ENCODE measurements at regions of chr2 and their contacts with region 1.

Region 1: GRCh38 chr2:217434181-217434975 is 568.4 kb downstream of the TNS1 start:
- DNase-seq: peak; percentile 95
- H3K4me3 ChIP-seq: peak overlapping the region; percentile 6 to 18 (median 12)
- H3K27ac ChIP-seq: peak overlapping the region; percentile 67 to 75 (median 75)
- H3K4me1 ChIP-seq: peaks cover 48 to 94% (median 90%) of the 10 kb centered on the region in 4 donors
- H3K27me3 ChIP-seq: no peaks in the 10 kb centered on the region
- CTCF ChIP-seq: no peak
- EP300 ChIP-seq: no peak
- POLR2A ChIP-seq: no peak

Region 2: DNA sequence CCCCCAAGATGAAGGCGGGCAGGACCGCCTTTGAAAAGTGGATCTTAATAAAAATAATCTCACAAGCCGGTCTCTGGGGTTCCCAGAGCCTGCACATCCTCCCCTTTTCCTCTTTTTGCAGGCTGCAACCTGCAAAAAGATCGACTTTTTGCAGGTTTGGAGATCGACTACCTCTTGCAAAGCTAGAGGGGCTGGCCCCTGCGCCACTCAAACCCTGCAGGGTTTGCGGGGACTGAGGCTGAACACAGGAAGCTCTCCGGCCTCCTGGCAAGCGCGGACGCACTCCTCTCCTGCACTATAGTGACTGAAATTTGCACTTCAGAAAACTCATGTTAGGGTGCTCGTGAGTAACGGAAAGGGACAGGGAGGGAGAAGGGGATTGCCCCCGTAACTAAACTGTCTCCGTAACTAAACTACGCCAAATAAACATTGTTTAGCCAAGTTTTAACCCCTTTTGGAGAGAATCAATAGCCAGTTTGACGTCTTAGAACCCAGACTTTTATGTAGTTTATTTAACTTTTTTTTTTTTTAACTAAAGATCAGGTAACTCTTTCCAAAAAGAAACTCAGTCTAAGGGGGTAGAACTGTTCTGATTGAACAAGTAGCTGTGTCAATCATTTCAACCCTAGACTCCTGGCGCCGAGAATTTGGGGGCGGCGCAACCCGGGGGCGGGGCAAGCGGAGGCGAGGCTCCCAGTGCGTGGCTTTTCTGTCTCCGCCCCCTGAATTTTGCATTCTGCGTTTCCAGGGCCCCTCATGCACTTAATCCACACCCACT is 741.6 kb before region 1 on chr2:
- intact Hi-C with region 1: loop called (anchors 5 kb)
- DNase-seq: peak; percentile 97
- H3K4me3 ChIP-seq: peak overlapping the region; percentile 70 to 77 (median 74)
- H3K27ac ChIP-seq: peak overlapping the region; percentile 84 to 94 (median 88)
- H3K4me1 ChIP-seq: peaks cover 54 to 98% (median 92%) of the 10 kb centered on the region in 4 donors
- H3K27me3 ChIP-seq: peaks cover 0 to 12% (median 0%) of the 10 kb centered on the region in 4 donors
- CTCF ChIP-seq: no peak
- EP300 ChIP-seq: no peak
- POLR2A ChIP-seq: no peak

Region 3: DNA sequence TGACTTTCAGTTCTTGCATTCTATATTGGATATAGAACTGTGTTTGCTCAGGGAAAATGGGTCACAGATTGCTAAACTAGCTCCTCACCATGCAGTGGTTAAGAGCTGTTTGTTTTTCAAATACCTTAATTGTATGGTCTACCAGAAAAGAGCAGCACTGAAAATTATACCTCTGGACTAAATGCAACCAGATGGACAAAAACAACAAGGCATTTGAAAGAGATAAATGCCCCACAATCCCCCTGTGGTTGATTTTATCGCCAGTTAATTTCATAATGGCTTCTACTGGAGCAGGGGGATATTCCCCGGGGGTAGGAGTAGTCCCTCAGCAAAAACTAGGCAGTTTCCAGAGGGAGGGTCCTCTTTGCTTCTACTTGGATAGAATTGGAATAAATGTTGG is 306.6 kb before region 1 on chr2:
- intact Hi-C with region 1: no loop called
- DNase-seq: no peak
- H3K4me3 ChIP-seq: no peak overlapping the region
- H3K27ac ChIP-seq: no peak overlapping the region
- H3K4me1 ChIP-seq: no peaks in the 10 kb centered on the region
- H3K27me3 ChIP-seq: no peaks in the 10 kb centered on the region
- CTCF ChIP-seq: no peak
- EP300 ChIP-seq: no peak
- POLR2A ChIP-seq: no peak

Region 4: GRCh38 chr2:217277646-217278398 is 156.6 kb before region 1 on chr2:
- intact Hi-C with region 1: loop called (anchors 10 kb)
- DNase-seq: no peak
- H3K4me3 ChIP-seq: no peak overlapping the region
- H3K27ac ChIP-seq: peak overlapping the region in 3 of 4 donors; percentile 20 to 56 (median 50)
- H3K4me1 ChIP-seq: peaks cover 16 to 31% (median 24%) of the 10 kb centered on the region in 4 donors
- H3K27me3 ChIP-seq: no peaks in the 10 kb centered on the region
- CTCF ChIP-seq: no peak
- EP300 ChIP-seq: peak; percentile 21
- POLR2A ChIP-seq: no peak

Region 5: DNA sequence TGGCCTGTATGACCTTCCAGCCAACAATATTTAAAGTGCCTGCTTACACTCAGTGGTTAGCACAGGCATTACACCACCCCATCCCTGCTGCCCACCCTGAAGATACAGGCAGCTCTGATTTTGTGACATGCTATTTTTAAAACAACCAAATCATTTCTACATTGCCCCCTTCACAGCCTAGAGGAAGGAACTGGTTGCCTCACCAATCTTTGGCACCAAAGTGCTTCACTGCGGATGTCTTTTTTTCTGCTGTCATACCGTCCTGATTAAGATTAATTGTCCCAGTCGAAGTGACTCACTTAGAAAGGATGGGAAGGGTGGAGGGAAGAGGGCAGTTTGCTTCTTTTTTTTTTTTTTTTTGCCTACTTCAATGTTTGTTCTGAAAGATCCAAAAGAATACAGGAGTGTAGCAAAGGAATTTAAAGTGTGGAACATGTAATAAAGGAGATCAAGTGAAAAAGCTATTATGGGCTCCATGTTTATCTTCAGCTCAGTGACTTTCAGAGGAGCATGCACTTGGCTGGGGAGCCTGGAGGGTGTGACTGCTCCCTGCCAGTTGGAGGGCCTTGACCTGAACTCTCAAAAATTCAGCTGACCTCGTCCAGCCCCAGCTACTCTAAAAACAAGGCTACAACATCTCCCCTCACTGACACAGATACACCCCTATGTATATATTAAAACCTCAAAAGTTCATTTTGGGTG is 73.4 kb before region 1 on chr2:
- intact Hi-C with region 1: loop called (anchors 5 kb)
- DNase-seq: peak; percentile 91
- H3K4me3 ChIP-seq: peak overlapping the region in 1 of 4 donors; percentile 1
- H3K27ac ChIP-seq: peak overlapping the region; percentile 82 to 86 (median 84)
- H3K4me1 ChIP-seq: peaks cover 37 to 98% (median 84%) of the 10 kb centered on the region in 4 donors
- H3K27me3 ChIP-seq: no peaks in the 10 kb centered on the region
- CTCF ChIP-seq: peak in 1 of 3 experiments; percentile 33
- EP300 ChIP-seq: no peak
- POLR2A ChIP-seq: no peak

Measured in esophagus muscularis mucosa (tissue), 4 donors.